ENCODE measurements at regions of chr9 and their contacts with region 1.

Region 1: DNA sequence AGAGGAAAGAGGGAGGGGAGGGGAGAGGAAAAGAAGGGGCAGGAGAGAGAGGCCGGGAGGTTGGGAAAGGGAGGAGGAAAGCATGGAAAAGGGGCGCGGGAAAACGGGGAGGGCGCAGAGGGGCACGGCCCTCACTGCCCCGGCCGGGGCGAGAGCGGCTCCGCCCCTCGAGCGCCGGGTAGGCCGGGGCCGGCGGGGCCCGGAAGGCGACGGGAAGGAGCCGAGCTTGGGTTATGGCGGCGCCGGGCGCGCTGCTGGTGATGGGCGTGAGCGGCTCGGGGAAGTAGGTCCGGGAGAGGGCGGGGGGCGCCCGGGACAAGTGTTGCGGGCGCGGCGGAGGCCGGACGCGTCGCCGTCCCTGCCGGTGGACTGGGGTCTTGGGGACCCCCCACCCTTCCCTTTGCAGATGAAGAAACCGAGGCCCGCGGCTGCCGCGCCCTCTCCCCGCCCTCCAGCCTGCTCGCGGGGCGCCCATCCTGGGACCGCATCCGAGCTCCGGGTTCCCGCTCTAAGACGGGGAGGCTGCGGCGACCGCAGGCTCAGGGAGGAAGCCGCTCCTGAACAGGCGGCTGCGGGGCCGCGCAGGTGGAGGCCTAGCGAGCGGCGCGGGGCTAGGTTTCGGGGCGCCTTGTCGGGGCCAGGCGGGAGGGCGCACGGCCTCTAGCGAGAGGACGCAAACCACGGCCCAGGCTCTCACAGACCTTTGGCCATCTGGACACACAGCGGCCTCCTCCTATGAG is at the start of gene IDNK:
- DNase-seq: peak; percentile 48
- H3K4me3 Mint-ChIP-seq: peak within 1 kb of the TSS; percentile 77
- H3K27ac Mint-ChIP-seq: peak within 1 kb of the TSS; percentile 91
- H3K4me1 Mint-ChIP-seq: peaks cover 8% of the 10 kb centered on the region
- H3K27me3 Mint-ChIP-seq: no peaks in the 10 kb centered on the region
- CTCF ChIP-seq: no peak
- total RNA-seq, gene IDNK: 3.7 and 4.2 TPM in 2 replicates

Region 2: DNA sequence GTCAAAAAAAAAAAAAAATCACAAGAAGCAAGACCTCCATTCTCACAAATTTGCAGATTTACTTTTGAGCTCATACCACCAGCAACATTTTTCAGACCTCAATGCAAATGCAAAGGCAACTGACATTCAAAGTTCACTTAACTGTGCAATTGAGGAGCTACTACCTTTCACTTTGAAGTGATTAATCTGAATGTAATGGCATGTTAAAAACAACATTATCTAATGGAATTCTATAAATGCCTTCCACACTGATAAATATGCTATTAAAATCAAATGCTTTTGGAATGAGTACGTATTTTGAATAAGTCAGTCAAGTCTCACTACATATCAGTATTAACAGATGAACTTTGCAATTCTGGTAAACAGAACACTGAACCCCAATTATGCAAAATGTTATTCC is 52.4 kb after region 1 on chr9:
- CTCF ChIA-PET with region 1: no interaction called
- intact Hi-C with region 1: no loop called
- DNase-seq: no peak
- H3K4me3 Mint-ChIP-seq: no peak overlapping the region
- H3K27ac Mint-ChIP-seq: no peak overlapping the region
- H3K4me1 Mint-ChIP-seq: no peaks in the 10 kb centered on the region
- H3K27me3 Mint-ChIP-seq: no peaks in the 10 kb centered on the region
- CTCF ChIP-seq: no peak

Region 3: DNA sequence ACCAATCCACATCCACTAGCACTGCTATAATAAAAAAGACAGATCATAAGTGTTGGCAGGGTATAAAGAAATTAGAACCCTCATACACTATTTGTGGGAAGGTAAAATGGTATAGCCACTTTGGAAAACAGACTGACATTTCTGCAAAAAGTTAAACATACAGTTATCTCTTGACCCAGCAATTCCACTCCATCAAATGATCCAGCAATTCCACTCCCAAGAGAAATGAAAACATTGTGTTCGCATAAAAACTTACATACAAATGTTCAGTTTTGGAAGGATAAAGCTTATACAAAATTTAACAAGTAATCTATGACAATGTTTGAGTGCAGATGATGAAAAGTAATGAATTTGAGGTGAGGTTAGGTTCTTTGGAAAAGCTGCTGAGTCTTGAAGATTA is 296.0 kb after region 1 on chr9:
- CTCF ChIA-PET with region 1: interaction called, 4 read pairs
- intact Hi-C with region 1: loop called (anchors 5 kb)
- DNase-seq: no peak
- H3K4me3 Mint-ChIP-seq: no peak overlapping the region
- H3K27ac Mint-ChIP-seq: no peak overlapping the region
- H3K4me1 Mint-ChIP-seq: no peaks in the 10 kb centered on the region
- H3K27me3 Mint-ChIP-seq: no peaks in the 10 kb centered on the region
- CTCF ChIP-seq: no peak